ENCODE measurements at regions of chr9 and their contacts with region 1.

Region 1: DNA sequence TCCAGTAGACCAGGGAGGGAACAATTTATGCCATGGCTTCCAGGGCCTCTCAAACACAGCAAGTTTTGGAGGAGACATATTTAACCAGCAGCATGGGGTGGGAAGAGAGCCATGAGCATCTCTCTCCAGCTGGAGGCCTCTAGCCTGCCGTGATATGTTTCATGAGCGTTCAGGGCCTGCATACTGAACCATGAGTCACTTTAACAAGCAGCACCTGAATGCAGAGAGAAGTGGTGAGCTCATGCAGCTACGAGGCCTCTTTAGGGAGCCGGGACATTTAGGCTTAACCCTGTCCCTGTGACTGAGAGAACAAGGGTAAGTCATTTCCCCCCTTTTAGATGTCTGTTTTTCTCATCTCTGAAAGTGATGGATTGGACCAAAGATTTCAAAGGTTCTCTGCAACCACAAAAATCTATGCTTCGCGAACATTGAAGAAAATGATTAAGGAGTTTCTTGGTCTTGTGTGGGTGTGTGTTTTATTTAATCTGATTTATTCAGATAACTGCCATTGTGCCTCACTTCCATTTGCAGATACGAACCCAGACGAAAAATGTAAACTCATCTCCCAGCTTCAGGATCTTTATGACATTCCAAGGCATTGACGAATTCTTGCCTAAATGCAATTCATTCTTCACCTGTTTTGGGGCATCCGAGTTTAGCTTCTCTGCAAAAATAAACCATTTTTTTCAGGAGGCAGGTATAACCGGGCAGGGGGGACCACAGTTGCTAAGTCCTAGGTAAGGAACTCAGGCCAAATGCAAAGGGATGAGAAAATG is 157.0 kb downstream of the GABBR2 start:
- DNase-seq: peak; percentile 80
- ATAC-seq: peak; percentile 93
- H3K4me3 ChIP-seq: peak overlapping the region; percentile 22; the same call in 1 of the 2 replicates
- H3K27ac ChIP-seq: peak overlapping the region; percentile 85
- H3K4me1 ChIP-seq: peaks cover 26% of the 10 kb centered on the region
- H3K27me3 ChIP-seq: no peaks in the 10 kb centered on the region
- CTCF ChIP-seq: no peak

Region 2: GRCh38 chr9:98627296-98627695 is 75.6 kb after region 1 on chr9:
- CTCF ChIA-PET with region 1: no interaction called
- POLR2A ChIA-PET with region 1: interaction called, 13 read pairs
- intact Hi-C with region 1: no loop called
- DNase-seq: no peak
- ATAC-seq: no peak
- H3K4me3 ChIP-seq: no peak overlapping the region
- H3K27ac ChIP-seq: no peak overlapping the region
- H3K4me1 ChIP-seq: no peaks in the 10 kb centered on the region
- H3K27me3 ChIP-seq: no peaks in the 10 kb centered on the region; the same call in 1 of the 2 replicates
- CTCF ChIP-seq: no peak

Region 3: DNA sequence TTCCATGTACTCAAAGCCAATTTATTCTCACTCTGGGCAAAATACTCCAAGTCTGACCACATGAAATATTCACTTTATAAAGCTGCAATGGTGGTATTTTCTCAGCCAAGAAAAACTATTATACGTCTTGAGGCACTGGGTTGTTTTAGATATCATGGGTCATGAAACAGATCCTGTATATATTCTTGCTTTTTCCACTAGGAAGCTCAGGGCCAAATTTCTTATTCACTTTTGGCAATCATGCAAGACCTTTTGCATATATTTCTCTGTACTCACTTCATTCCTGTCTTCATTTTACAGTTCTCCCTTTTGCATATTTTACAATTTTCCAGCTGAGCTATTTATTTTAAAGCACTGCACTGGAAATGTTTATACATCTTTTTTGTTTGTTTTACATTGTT is 107.3 kb after region 1 on chr9:
- CTCF ChIA-PET with region 1: no interaction called
- POLR2A ChIA-PET with region 1: no interaction called
- intact Hi-C with region 1: loop called (anchors 2 kb)
- DNase-seq: peak; percentile 6
- ATAC-seq: peak; percentile 37
- H3K4me3 ChIP-seq: no peak overlapping the region
- H3K27ac ChIP-seq: no peak overlapping the region
- H3K4me1 ChIP-seq: peaks cover 12% of the 10 kb centered on the region
- H3K27me3 ChIP-seq: no peaks in the 10 kb centered on the region
- CTCF ChIP-seq: no peak

Region 4: DNA sequence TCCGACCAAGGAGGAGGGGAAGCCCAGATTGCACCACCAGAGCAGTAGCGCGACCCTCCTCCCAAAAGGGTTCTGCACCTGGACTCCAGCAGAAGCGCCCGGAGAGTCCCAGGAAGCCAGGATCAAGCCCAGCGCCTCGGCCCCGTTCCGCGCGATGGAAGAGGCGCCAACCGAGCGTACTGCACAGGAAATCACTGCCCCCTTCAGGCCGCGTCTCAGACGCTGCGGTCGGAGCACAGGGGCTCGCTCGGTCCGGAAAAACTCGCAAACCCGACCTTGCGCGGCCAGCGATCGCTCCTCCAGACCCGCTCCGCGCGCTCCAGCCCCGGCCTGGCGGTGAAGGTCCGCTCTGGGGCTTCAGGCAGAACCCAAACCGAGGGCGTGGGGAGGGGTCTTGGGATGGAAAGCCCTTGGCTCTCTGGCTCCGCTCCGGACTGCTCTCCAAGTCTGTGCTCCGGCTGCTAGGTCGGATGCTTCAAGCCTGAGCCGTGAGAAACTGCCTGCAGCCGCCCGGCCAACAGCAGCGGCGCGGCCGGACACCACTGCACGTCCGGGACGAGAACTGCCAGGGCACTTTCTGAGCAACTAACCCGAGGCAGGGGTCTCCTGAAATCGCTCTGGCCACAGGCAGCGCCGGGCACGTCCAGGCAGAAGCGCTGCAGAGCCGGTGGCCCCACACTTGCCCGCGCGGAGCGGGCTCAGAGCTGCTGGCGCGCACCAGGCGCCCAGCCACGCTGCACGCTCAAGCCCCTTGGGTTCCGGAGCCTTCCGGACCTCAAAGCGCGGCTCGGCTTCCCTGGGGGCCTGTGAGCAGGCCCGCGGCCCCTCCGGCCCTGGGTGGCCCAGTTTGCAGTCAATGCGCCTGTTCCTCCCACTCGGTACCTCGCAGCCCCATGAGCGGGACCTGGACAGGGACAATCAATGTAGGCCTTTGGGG is 155.7 kb after region 1 on chr9:
- CTCF ChIA-PET with region 1: no interaction called
- POLR2A ChIA-PET with region 1: no interaction called
- intact Hi-C with region 1: loop called (anchors 10 kb)
- DNase-seq: peak; percentile 61
- ATAC-seq: peak; percentile 85
- H3K4me3 ChIP-seq: peak overlapping the region; percentile 60
- H3K27ac ChIP-seq: no peak overlapping the region
- H3K4me1 ChIP-seq: no peaks in the 10 kb centered on the region
- H3K27me3 ChIP-seq: peaks cover 30% of the 10 kb centered on the region
- CTCF ChIP-seq: peak; percentile 58

Region 5: GRCh38 chr9:98775831-98776441 is 224.2 kb after region 1 on chr9:
- CTCF ChIA-PET with region 1: interaction called, 4 read pairs
- POLR2A ChIA-PET with region 1: no interaction called
- intact Hi-C with region 1: loop called (anchors 10 kb)
- DNase-seq: peak; percentile 64
- ATAC-seq: peak; percentile 36
- H3K4me3 ChIP-seq: no peak overlapping the region
- H3K27ac ChIP-seq: no peak overlapping the region
- H3K4me1 ChIP-seq: peaks cover 28% of the 10 kb centered on the region
- H3K27me3 ChIP-seq: no peaks in the 10 kb centered on the region
- CTCF ChIP-seq: peak; percentile 80